PC-9 (cell line): ENCODE measurements at regions of chr11 and their contacts with region 1.

Region 1: DNA sequence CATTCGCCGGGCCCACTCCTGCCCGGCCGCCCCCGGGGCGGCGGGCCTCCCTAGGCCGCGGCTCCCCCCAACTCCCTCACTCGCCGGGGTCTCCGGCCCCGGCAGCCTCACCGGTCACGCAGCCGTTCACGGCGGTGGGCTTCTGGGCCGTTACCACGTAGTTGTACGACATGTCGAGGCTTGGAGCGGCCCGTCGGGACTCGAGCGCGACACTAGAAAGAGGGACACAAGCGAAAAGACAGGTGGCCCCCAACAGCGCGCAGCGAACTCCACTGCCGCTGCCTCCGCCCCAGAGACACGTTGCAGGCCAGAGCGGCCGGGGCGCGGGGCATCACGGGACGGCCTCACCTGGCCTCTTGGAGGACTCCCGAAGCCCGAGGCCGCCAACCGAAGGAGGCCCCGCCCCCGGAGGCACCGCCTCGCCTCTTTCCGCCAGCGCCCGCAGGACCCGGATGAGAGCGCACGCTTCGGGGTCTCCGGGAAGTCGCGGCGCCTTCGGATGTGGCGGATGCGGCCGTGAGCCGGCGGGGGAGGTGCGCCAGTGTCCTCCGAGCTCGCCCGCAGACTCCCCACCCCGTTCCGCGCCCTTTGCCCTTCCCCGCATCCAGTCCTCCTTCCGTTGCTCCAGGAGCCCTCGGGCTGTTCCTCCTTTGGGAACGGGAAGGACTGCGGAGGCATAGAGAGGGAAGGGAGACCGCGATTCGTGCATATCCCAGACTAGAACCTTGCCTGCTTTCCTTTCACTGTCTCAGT is at the starts of genes DDB1 and TKFC:
- DNase-seq: peak; percentile 88 to 99
- H3K4me3 ChIP-seq: peak within 1 kb of the TSS; percentile 99
- H3K27ac ChIP-seq: peak within 1 kb of the TSS; percentile 64
- H3K4me1 ChIP-seq: peaks cover 35% of the 10 kb centered on the region
- H3K27me3 ChIP-seq: no peaks in the 10 kb centered on the region
- CTCF ChIP-seq: no peak; the same call in 1 of the 2 replicates
- total RNA-seq, gene DDB1: 302 and 305 TPM in 2 replicates
- total RNA-seq, gene TKFC: 168 and 258 TPM in 2 replicates

Region 2: GRCh38 chr11:61290905-61291690 is 41.9 kb before region 1 on chr11:
- CTCF ChIA-PET with region 1: no interaction called
- POLR2A ChIA-PET with region 1: no interaction called
- intact Hi-C with region 1: no loop called
- DNase-seq: no peak
- H3K4me3 ChIP-seq: no peak overlapping the region
- H3K27ac ChIP-seq: no peak overlapping the region
- H3K4me1 ChIP-seq: no peaks in the 10 kb centered on the region
- H3K27me3 ChIP-seq: peaks cover 14% of the 10 kb centered on the region; the same call in 1 of the 2 replicates
- CTCF ChIP-seq: no peak; the same call in 1 of the 2 replicates

Region 3: DNA sequence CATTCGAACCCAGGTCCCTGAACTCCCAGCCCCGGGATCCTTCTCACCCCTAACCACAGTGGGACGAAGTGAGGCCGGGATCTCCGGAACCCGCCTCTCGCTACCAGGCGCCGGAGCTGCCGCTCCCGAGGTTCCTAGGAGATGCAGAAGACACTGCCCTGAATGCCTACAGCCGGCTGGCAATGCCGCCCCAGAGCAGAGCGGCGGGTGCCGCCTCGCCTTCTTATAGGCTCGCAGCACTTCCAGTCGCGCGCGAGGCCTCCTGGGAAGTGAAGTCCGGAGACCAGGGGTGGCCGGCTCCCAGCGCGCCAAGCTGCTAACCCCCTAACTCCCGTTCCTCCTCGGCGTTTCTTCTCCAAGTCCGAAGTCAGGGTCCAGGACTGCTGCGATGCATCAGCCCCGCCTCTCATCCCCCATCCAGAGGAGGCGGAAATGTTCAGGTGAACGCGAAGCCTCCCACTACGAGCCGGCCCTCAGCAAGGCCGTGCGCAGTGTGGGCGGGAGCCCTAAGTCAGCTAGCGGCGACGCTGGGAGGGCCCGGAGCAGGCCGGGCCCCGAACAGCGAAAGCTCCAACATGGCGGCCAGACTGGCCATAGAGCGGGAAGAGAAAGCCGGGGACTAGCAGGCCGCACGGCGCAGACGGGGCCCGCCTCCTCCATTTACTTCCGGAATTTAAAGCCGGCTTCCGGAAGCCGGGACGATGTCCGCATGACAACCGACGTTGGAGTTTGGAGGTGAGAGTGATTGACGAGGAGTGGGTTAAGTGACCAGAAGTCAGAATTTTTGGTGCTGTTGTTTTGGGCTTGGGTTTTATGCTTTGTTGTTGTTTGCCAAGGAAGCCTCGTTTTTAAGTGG is 28.9 kb after region 1 on chr11 and contains the starts of genes CYB561A3 and TMEM138:
- CTCF ChIA-PET with region 1: interaction called, 31 read pairs
- POLR2A ChIA-PET with region 1: interaction called, 13 read pairs
- intact Hi-C with region 1: loop called (anchors 1 kb)
- DNase-seq: peak; percentile 89 to 96
- H3K4me3 ChIP-seq: peak within 1 kb of the TSS; percentile 86
- H3K27ac ChIP-seq: peak within 1 kb of the TSS; percentile 93
- H3K4me1 ChIP-seq: peaks cover 20% of the 10 kb centered on the region
- H3K27me3 ChIP-seq: no peaks in the 10 kb centered on the region
- CTCF ChIP-seq: no peak
- total RNA-seq, gene CYB561A3: 96.9 and 120 TPM in 2 replicates
- total RNA-seq, gene TMEM138: 32.5 and 46.1 TPM in 2 replicates

Region 4: DNA sequence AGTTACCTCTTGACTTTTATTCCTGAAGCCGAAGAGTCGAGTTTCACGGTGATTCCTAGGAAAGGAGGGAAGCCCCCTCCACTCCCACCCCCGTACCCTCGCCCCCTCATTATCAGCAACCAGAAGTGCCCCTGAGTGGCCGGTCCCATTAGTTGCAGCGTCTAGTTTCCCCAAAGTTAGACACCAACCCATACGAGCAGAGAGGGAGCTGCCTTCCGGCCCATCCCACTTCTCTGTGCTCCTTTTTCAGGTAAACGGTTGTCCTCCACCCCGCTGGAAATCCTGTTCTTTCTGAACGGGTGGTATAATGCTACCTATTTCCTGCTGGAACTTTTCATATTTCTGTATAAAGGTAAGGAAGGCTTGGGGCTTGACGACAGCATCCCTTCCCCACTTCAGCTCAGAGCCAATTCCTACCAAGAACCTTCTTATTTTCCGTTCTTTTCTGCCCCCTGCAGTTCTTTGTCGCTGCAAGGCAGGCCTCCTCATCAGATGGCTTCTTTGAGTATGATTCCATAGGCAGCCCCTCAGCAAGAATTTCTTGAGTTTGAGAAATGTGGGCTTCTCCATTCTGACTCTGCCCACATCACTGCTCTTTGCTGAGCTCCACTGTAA is 60.1 kb after region 1 on chr11:
- CTCF ChIA-PET with region 1: interaction called, 21 read pairs
- POLR2A ChIA-PET with region 1: interaction called, 7 read pairs
- intact Hi-C with region 1: loop called (anchors 2 kb)
- DNase-seq: peak in 1 of 2 experiments; percentile 10
- H3K4me3 ChIP-seq: peak overlapping the region; percentile 81
- H3K27ac ChIP-seq: peak overlapping the region; percentile 52
- H3K4me1 ChIP-seq: peaks cover 11% of the 10 kb centered on the region
- H3K27me3 ChIP-seq: no peaks in the 10 kb centered on the region
- CTCF ChIP-seq: no peak; the same call in 1 of the 2 replicates

Region 5: GRCh38 chr11:61509043-61510029 is 176.4 kb after region 1 on chr11:
- CTCF ChIA-PET with region 1: no interaction called
- POLR2A ChIA-PET with region 1: no interaction called
- intact Hi-C with region 1: loop called (anchors 10 kb)
- DNase-seq: peak; percentile 73 to 83
- H3K4me3 ChIP-seq: peak overlapping the region; percentile 48; the same call in 1 of the 2 replicates
- H3K27ac ChIP-seq: no peak overlapping the region
- H3K4me1 ChIP-seq: peaks cover 43% of the 10 kb centered on the region
- H3K27me3 ChIP-seq: peaks cover 28% of the 10 kb centered on the region
- CTCF ChIP-seq: peak; percentile 57

Region 6: DNA sequence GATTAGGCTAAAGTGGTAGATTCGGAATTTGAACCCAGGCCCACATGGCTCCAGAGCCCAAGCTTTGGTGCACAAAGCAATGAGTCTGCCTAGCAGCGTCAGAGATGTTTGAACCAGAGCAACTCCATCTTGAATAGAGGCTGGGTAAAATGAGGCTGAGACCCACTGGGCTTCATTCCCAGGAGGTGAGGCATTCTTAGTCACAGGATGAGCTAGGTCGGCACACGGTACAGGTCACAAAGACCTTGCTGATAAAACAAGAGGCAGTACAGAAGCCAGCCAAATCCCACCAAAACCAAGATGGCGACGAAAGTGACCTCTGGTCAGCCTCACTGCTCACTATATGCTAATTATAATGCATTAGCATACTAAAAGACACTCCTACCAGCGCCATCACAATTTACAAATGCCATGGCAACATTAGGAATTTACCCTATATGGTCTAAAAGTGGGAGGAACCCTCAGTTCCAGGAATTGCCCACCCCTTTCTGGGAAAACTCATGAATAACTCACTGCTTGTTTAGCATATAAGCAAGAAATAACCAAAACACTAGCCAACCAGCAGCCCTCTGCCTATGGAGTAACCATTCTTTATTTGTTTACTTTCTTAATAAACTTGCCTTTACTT is 307.0 kb after region 1 on chr11:
- CTCF ChIA-PET with region 1: interaction called, 14 read pairs
- POLR2A ChIA-PET with region 1: no interaction called
- intact Hi-C with region 1: no loop called
- DNase-seq: no peak
- H3K4me3 ChIP-seq: no peak overlapping the region
- H3K27ac ChIP-seq: no peak overlapping the region
- H3K4me1 ChIP-seq: no peaks in the 10 kb centered on the region
- H3K27me3 ChIP-seq: no peaks in the 10 kb centered on the region
- CTCF ChIP-seq: no peak